ENCODE measurements at regions of chr12 and their contacts with region 1.

Region 1: GRCh38 chr12:10571141-10571540 is 42.3 kb downstream of the MAGOHB start:
- DNase-seq: no peak
- H3K4me3 ChIP-seq: no peak overlapping the region
- H3K27ac ChIP-seq: no peak overlapping the region
- H3K4me1 ChIP-seq: no peaks in the 10 kb centered on the region
- H3K27me3 ChIP-seq: no peaks in the 10 kb centered on the region
- CTCF ChIP-seq: no peak
- POLR2A ChIP-seq: no peak

Region 2: GRCh38 chr12:10320643-10321042 is 250.5 kb before region 1 on chr12:
- intact Hi-C with region 1: loop called (anchors 10 kb)
- DNase-seq: no peak
- H3K4me3 ChIP-seq: no peak overlapping the region
- H3K27ac ChIP-seq: no peak overlapping the region
- H3K4me1 ChIP-seq: no peaks in the 10 kb centered on the region
- H3K27me3 ChIP-seq: no peaks in the 10 kb centered on the region
- CTCF ChIP-seq: no peak
- POLR2A ChIP-seq: no peak

Region 3: GRCh38 chr12:10690906-10691305 is 119.8 kb after region 1 on chr12:
- intact Hi-C with region 1: no loop called
- DNase-seq: no peak
- H3K4me3 ChIP-seq: no peak overlapping the region
- H3K27ac ChIP-seq: no peak overlapping the region
- H3K4me1 ChIP-seq: no peaks in the 10 kb centered on the region
- H3K27me3 ChIP-seq: no peaks in the 10 kb centered on the region
- CTCF ChIP-seq: no peak
- POLR2A ChIP-seq: no peak

Measured in vagina (tissue), 2 donors.